Right ventricle myocardium inferior (tissue), 1 donor: ENCODE measurements at regions of chr12 and their contacts with region 1.

Region 1: DNA sequence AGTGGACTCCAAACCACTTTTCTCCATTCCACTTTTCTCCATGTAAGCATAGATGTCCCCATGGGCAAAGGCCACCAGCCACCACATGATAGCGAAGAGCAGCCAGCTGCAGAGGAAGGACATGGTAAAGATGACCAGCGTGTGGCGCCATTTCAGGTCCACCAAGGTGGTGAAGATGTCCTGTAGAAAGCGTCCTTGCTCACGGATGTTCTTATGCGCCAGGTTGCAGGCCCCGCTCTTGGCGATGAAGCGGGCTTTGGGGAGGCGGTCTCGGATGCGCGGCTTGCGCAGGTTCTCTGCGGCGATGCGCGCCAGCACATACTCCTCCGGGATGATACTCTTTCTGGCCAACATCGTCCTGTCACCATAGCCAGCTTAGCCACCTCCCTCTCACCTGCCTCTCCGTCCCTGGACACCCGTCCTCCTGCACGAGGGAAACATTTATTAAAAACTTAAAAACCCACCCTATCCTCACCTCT is 1.2 kb downstream of the KCNJ8 start:
- DNase-seq: peak; percentile 70
- ATAC-seq: peak; percentile 36

Region 2: GRCh38 chr12:21710948-21711775 is 62.1 kb before region 1 on chr12:
- intact Hi-C with region 1: loop called (anchors 5 kb)
- DNase-seq: no peak
- ATAC-seq: peak; percentile 48

Region 3: GRCh38 chr12:21818627-21819026 is 45.3 kb after region 1 on chr12:
- intact Hi-C with region 1: loop called (anchors 5 kb)
- DNase-seq: no peak
- ATAC-seq: no peak

Region 4: GRCh38 chr12:21831791-21832344 is 58.6 kb after region 1 on chr12:
- intact Hi-C with region 1: loop called (anchors 5 kb)
- DNase-seq: no peak
- ATAC-seq: peak; percentile 71

Region 5: DNA sequence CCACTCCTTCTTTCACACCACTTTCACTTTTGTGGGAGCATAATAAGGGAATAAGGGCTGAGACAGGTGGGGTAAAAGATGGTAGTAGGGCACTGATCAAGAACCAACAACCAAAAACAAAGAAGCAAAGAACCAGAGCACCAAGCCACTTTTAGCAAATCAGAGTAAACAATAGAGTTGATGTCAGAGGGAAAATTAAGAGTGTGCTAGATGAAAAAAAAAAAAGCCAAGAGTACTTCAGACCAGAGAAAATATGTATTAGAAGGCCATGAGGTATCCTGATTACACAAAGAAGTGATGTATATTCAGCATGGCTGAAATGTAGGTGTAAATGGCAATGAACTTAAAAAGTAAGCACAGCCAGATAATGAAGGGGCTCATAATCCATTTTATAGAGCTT is 92.5 kb after region 1 on chr12:
- intact Hi-C with region 1: no loop called
- DNase-seq: no peak
- ATAC-seq: no peak

Region 6: DNA sequence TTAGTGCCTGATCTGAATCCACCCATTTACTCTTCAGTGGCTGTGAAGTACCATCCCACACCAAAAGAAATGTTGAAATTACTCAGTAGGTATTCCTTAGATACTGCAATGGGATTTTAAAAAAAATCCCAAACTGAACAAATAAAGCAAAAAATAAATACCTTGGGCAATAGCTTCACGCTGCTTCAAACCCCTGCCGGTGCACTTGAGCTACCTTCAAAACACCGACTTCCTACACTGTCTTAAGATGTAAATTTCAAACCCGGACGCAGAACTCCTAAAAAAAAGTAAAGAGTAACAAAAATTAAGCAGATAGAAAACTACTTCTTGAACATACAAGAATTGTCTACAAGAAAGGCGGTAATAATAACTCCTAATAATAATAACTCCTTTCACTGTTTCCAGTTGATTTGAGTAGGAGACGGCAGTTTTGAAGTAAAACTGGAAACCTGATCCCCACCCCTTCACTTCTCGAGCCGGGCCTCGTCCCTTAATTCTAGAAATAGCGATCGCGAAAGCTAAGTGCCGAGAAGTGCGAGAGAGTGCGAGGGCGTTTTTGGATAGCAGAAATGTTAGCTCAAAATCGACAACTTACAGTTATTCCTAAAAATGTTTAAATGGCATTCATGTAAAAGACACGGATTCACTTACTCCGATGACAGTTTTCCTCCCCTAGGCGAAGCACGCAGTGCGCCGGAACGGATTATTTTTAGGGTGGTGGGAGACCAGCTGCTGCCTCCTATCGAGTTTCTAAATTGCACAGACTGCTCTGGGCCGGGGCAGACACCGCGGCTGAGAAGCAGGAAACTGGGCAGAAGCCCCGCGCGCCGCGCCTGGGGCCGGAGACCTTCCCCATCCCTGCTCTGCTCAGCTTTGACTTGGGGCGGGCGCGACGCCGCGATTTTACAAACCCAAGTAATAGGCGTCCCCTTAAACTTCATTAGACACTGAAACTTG is 167.5 kb after region 1 on chr12 and contains the start of gene ABCC9:
- intact Hi-C with region 1: loop called (anchors 1 kb)
- DNase-seq: peak; percentile 66
- ATAC-seq: peak; percentile 81
- total RNA-seq, gene ABCC9: 78.1 TPM

Region 7: GRCh38 chr12:22051114-22051698 is 277.9 kb after region 1 on chr12:
- intact Hi-C with region 1: no loop called
- DNase-seq: no peak
- ATAC-seq: no peak